ENCODE measurements at regions of chr5 and their contacts with region 1.

Region 1: DNA sequence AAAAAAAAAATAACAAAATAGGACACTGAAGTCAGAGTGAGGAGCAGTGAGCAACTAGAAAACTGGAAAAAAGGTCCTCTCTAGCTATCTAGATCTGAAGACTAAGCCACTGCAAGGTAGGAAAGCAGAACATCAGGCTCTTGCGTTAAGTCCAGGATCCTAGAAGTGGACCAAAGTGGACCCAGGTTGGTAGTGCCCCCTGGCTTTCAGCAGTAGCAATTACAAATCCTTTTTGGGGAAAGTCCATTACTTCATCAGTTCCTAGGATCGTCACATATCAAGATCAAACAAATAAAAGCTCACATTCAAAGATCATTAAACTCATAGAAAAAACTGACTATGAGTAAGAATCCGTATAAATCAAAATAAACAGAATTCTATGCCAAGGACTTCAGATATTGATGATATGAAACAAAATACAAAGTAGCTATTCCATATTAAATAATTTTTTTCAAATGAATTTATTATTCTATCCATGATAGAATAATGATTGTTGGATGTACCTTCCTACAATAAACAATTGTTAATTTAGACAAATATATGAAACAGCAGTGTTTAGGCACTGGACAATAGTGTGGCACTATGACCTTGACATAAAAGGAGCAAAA is 6.5 kb upstream of the RICTOR start:
- DNase-seq: peak; percentile 81
- H3K4me3 ChIP-seq: no peak overlapping the region
- H3K27ac ChIP-seq: no peak overlapping the region
- H3K4me1 ChIP-seq: peaks cover 0 to 20% (median 1%) of the 10 kb centered on the region in 4 donors
- H3K27me3 ChIP-seq: no peaks in the 10 kb centered on the region
- CTCF ChIP-seq: peak; percentile 78 to 91 (median 84)
- EP300 ChIP-seq: no peak
- POLR2A ChIP-seq: no peak

Region 2: DNA sequence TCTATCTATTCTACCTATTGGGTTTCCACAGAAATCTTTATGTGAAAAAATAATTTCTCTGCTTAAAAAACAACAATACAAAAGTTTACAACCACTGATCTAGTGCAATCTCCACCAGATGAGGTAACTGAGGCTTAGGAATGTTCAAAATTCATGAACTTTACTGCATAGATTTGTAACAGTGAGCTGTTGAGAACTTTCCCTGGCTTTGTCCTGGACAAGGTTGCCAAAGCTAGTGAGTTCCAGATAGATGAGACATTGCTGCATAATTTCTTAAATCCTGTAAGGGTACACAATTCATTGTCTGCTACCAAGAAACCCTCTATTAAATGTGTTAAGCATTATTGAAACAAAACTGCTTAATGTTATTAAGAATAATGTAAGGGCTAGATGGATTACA is 132.2 kb before region 1 on chr5:
- intact Hi-C with region 1: no loop called
- DNase-seq: no peak
- H3K4me3 ChIP-seq: no peak overlapping the region
- H3K27ac ChIP-seq: no peak overlapping the region
- H3K4me1 ChIP-seq: no peaks in the 10 kb centered on the region
- H3K27me3 ChIP-seq: no peaks in the 10 kb centered on the region
- CTCF ChIP-seq: no peak
- EP300 ChIP-seq: no peak
- POLR2A ChIP-seq: no peak

Region 3: DNA sequence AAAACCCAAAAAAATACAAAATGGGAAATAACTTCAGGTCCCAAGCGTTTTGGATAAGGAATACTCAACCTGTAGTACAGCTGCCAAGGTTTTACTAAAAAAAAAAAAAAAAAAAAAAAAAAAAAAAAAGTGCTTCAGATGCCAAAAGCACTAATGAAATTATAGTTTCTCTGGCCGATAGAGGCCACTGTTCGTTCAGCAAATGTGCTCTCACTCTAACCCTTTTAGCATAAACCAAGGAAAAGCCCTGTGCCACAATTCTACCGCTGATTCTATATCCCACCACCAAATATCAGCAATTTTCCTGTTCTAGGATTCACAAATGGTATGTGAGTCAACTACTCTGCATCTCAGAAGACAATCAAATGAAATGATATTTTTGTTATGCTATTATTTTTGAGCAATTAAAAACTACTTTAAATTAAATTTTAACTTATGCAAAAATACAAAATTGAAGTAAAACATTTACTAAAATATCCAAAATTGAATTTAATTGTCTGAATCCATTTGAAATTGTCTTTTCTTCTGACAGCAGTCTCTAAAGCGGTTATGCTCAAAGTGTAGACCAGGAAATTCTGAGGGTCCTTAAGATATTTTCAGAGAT is 86.3 kb before region 1 on chr5:
- intact Hi-C with region 1: loop called (anchors 2 kb)
- DNase-seq: no peak
- H3K4me3 ChIP-seq: no peak overlapping the region
- H3K27ac ChIP-seq: no peak overlapping the region
- H3K4me1 ChIP-seq: peaks cover 0 to 10% (median 5%) of the 10 kb centered on the region in 4 donors
- H3K27me3 ChIP-seq: no peaks in the 10 kb centered on the region
- CTCF ChIP-seq: peak in 3 of 4 experiments; percentile 30 to 57 (median 38)
- EP300 ChIP-seq: no peak
- POLR2A ChIP-seq: no peak

Region 4: DNA sequence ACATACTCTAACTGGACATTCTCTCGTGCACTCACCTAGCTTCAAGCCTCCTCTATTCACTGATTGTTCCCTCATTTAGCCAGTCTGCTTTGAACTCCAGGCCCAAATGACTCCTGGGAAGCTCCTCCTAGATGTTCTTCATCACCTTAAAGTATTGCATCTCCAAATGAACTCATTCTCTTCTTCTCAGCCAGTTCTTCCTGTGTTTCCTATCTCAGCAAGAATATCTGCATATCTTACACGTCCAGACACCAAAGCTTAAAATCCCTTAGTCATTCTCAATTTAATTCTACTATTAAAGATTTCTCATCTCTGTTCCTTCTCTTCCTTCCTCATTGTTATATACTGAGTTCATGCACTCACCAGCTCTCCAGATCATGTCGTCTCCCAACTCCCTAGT is 462.6 kb after region 1 on chr5:
- intact Hi-C with region 1: no loop called
- DNase-seq: no peak
- H3K4me3 ChIP-seq: no peak overlapping the region
- H3K27ac ChIP-seq: no peak overlapping the region
- H3K4me1 ChIP-seq: peaks cover 0 to 55% (median 27%) of the 10 kb centered on the region in 4 donors
- H3K27me3 ChIP-seq: no peaks in the 10 kb centered on the region
- CTCF ChIP-seq: no peak
- EP300 ChIP-seq: no peak
- POLR2A ChIP-seq: no peak

Measured in sigmoid colon (tissue), 7 donors.